A549 (cell line): ENCODE measurements at regions of chr20 and their contacts with region 1.

Region 1: DNA sequence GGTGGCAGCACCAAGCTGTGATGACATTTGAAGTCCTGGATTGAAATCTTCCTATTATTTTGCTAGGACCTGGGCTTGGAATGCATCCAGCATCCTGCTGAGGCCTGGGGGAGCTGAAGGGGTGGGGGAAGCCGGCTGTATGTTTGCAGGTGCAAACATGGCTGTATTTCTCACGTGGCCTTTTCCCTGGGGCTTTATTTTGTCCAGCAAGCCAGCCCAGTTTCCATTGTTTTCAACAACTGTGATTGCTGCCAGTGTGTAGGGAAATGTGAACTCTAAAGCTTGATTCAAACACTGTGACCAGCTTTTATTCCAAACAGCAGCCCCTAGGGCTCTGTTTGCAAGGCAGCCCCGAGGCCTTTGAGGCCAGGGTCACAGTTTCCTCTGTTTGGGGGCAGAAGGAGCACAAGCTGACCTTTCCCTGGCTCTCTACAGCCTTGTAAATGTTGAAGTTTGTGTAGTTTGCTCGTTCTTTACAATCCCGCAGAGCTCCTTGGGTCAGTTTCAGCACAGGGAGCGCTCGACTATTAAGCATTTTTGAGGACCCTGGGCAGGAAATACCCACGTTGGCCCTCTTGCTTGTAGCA is 683.1 kb downstream of the DHX35 start:
- DNase-seq: no peak
- ATAC-seq: no peak
- H3K4me3 ChIP-seq: no peak overlapping the region
- H3K27ac ChIP-seq: no peak overlapping the region
- H3K4me1 ChIP-seq: no peaks in the 10 kb centered on the region
- CTCF ChIP-seq: no peak
- EP300 ChIP-seq: no peak
- POLR2A ChIP-seq: no peak
- RAD21 ChIP-seq: no peak

Region 2: GRCh38 chr20:39676857-39677391 is 31.7 kb after region 1 on chr20:
- CTCF ChIA-PET with region 1: no interaction called
- POLR2A ChIA-PET with region 1: interaction called, 11 read pairs
- DNase-seq: peak in 1 of 2 experiments; percentile 5
- ATAC-seq: no peak
- H3K4me3 ChIP-seq: no peak overlapping the region
- H3K27ac ChIP-seq: no peak overlapping the region
- H3K4me1 ChIP-seq: no peaks in the 10 kb centered on the region
- CTCF ChIP-seq: peak; percentile 11; the same call in 1 of the 3 replicates
- EP300 ChIP-seq: no peak
- POLR2A ChIP-seq: no peak
- RAD21 ChIP-seq: no peak